ENCODE measurements at regions of chr2 and their contacts with region 1.

Region 1: DNA sequence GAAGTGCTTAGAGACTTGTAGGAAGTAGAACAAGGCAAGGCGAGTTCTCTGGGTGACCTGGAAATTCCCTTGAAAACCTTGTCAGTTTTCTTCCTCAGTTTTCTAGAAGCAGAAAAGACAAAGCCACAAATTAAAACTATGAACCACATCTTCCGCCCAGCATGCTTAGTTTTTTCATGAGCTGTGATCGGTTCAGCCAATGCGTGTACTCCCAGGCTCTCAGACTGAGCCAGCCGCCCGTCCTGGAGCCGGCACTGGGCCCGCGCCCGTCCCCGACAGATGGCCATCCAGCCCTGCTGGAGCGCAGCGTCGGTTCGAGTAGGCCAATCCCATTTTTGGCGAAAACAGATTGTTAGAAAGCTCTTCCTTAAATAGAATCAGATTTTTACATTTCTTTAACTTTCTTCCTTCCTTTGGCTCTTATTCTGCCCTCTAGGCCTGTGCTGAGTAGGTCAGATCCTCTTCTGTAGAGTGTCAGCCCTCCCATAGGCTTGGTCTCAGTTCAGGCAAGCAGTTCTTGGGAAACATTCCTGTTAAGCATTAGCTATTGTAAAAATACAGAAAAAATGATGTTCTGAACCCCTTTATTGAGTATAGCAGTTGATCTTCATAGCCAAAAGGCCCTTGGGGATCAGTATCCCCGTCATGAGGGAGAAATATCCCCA is 112.5 kb downstream of the NCK2 start:
- DNase-seq: peak in 8 of 10 donors; percentile 57 to 96 (median 70)

Region 2: GRCh38 chr2:105454801-105455485 is 402.3 kb before region 1 on chr2:
- intact Hi-C with region 1: no loop called
- DNase-seq: no peak

Region 3: GRCh38 chr2:105734762-105735538 is 122.3 kb before region 1 on chr2:
- intact Hi-C with region 1: no loop called
- DNase-seq: no peak

Region 4: GRCh38 chr2:105789745-105790460 is 67.3 kb before region 1 on chr2:
- intact Hi-C with region 1: loop called (anchors 2 kb)
- DNase-seq: peak in 1 of 10 donors; percentile 39

Region 5: DNA sequence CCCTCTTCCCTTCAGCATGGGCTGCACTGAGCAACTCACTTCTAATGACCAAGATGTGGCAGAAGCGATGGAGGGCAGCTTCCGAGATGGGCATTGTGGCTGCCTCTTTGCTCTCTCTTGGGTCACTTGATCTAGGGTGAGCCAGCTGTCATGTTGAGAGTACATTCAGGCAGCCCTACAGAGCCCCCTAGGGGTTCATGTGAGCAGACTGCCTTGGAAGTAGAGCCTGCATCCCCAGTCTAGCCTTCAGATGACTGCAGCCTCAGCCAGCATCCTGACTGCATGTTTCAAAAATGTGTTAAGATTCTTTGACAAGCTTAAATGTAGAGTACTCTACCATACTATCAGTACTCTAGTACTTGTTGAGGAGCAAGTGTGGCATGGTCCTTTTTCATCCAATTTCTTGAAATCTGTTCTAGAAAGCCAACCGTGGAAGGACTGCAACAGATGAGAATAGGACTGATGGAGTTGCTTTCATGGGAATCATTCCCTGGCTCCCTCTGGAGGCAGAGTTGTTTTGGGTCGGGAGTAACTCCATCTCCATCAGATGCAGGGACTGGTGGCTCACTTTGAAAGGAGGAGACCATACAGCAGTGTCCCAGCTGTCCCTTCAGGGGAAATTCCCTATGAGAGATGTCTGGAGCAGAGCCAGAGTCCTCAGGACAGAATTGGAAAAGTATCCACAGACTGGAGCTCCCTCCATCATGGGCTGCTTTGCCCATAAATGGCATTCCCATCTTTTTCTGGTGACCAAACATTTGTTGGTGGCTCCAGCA is 31.6 kb after region 1 on chr2:
- intact Hi-C with region 1: no loop called
- DNase-seq: no peak

Region 6: GRCh38 chr2:106175086-106175850 is 318.1 kb after region 1 on chr2:
- intact Hi-C with region 1: no loop called
- DNase-seq: no peak